ENCODE measurements at regions of chr2 and their contacts with region 1.

Region 1: GRCh38 chr2:108594132-108594981 is 60.1 kb downstream of the LIMS1 start:
- DNase-seq: no peak
- ATAC-seq: peak; percentile 70
- H3K4me3 ChIP-seq: no peak overlapping the region
- H3K27ac ChIP-seq: peak overlapping the region; percentile 48 to 99
- H3K4me1 ChIP-seq: peaks cover 2 to 11% of the 10 kb centered on the region in 2 donors
- H3K27me3 ChIP-seq: no peaks in the 10 kb centered on the region

Region 2: GRCh38 chr2:108583903-108584520 is 10.3 kb before region 1 on chr2:
- intact Hi-C with region 1: no loop called
- DNase-seq: no peak
- ATAC-seq: peak; percentile 88
- H3K4me3 ChIP-seq: no peak overlapping the region
- H3K27ac ChIP-seq: peak overlapping the region in 1 of 2 donors; percentile 17
- H3K4me1 ChIP-seq: peaks cover 0 to 4% of the 10 kb centered on the region in 2 donors
- H3K27me3 ChIP-seq: no peaks in the 10 kb centered on the region

Region 3: DNA sequence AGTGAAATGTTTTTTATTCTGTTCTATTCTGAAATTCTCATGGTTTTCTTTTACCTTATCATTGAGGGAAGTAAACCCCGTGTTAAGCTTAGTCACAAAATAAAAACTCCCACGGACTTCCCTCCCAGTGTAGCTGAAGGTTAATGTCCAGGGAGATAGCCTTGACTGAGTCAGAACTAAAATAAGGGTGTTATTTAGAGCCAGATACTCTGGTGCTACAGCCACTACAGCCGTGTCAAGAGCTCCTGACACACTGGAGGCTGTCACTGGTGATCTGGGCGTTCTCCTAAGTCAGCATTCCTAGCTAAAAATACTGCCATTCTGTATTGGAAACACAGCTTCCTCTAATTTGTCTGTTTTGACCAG is 42.9 kb after region 1 on chr2:
- intact Hi-C with region 1: loop called in 1 of 2 experiments (anchors 2 kb)
- DNase-seq: peak in 1 of 2 donors; percentile 79
- ATAC-seq: peak; percentile 88
- H3K4me3 ChIP-seq: no peak overlapping the region
- H3K27ac ChIP-seq: no peak overlapping the region
- H3K4me1 ChIP-seq: peaks cover 4 to 5% of the 10 kb centered on the region in 2 donors
- H3K27me3 ChIP-seq: no peaks in the 10 kb centered on the region